PC-9 (cell line): ENCODE measurements at regions of chr14 and their contacts with region 1.

Region 1: DNA sequence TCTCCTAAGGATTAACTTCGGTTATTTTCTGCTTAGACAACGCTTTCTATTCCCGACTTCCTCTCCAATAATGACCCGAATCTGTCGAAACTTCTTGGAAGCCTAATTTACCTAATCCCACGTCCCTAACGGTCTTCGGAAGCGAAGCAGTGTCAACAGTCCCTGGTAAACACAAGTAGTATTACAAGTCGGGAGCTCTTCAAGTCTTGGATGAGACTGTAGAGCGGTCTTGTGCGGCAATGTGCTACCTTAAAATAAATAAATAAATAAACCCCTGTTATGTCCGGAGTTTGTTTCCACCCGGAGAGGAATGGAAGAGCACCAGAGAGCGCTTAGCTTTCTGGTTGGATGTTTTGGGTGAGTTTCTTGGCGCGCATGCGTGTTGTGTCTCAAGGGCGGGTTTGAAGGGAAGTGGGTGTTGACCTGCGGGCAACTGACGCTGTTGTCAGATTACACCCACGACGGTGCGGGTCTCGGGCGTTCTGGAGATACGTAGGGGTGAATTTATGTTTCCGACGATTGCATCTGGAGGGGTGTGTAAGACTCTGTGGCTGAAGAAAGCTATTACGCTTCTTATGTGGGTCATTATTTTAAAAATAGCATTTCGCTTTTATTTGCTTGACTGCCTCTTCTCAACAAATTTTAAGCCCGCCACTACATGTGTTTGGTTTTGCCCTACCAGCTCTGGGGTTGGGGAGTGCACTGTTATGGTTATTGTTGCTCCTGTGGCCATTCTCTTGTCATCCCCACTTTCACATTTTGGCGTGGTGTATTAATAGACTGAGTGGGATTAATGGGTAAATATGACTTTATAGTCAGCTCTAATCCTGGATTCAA is at the starts of genes KIAA0586 and TIMM9:
- DNase-seq: peak; percentile 91 to 92
- H3K4me3 ChIP-seq: peak within 1 kb of the TSS; percentile 90
- H3K27ac ChIP-seq: peak within 1 kb of the TSS; percentile 80
- H3K4me1 ChIP-seq: peaks cover 22% of the 10 kb centered on the region
- H3K27me3 ChIP-seq: no peaks in the 10 kb centered on the region
- CTCF ChIP-seq: no peak
- total RNA-seq, gene KIAA0586: 13.2 and 20.4 TPM in 2 replicates
- total RNA-seq, gene TIMM9: 37.0 and 42.7 TPM in 2 replicates

Region 2: DNA sequence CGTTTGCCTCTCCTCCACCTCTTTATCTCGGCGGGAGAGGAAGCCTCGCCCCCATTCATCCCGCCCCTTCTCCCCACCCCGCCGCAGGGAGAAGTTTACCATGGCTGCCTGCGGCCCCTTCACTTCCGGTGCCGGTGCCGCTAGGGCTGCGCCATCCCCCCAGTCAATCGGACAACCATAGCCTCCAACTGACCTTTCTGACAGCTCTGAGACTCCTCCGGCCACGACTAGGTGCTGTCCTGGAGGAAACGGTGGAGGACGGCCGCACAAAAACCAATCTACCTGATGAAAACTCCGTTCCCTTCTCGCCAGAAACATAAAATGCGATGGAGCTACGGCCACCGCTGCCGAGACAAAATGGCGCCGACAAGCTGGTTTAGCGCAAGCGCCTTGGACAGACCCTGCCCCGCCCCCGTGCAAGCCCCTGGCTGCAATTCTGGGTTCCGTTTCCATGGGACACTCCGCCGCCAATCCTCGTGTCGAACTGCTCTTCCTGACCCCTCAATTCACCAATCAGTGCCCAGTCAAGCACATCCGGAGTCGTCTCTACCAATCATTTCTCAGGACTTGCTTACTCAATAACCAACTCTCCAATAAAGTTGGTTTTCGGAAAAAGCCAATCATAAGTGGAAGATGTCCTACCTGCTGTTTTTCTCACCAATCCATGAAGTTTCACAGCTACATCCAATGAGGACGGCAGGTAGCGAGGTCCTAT is 129.6 kb before region 1 on chr14:
- CTCF ChIA-PET with region 1: no interaction called
- POLR2A ChIA-PET with region 1: interaction called, 34 read pairs
- intact Hi-C with region 1: loop called (anchors 1 kb)
- DNase-seq: peak; percentile 97 to 100
- H3K4me3 ChIP-seq: peak overlapping the region; percentile 80
- H3K27ac ChIP-seq: peak overlapping the region; percentile 97
- H3K4me1 ChIP-seq: peaks cover 21% of the 10 kb centered on the region
- H3K27me3 ChIP-seq: no peaks in the 10 kb centered on the region
- CTCF ChIP-seq: no peak